HepG2 (cell line): ENCODE measurements at regions of chr11 and their contacts with region 1.

Region 1: DNA sequence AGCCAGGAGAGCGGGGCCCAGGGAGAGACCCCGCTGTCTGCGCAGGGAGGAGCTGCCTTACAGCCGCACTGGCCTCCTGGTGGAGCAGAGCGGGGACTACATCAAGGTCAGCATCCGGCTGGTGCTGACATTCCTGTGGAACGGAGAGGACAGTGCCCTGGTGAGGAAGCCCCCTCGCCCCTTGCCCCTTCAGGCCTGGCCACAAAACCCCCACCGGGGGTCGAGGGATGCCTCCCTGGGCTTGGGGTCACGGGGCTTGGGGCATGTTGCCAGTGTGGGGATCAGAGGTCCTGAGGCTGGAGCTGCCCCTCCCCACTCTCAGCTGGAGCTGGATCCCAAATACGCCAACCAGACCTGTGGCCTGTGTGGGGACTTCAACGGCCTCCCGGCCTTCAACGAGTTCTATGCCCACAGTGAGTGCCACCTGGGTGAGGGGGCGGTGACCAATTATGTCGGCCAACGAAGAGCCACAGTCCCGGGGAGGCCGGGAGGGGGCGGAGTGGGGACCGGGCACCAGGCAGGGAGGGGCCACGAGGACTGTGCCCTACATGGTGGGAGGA is 4.2 kb downstream of the MUC5B start:
- DNase-seq: no peak
- ATAC-seq: peak; percentile 70
- H3K4me3 ChIP-seq: no peak overlapping the region
- H3K27ac ChIP-seq: no peak overlapping the region
- H3K4me1 ChIP-seq: peaks cover 13% of the 10 kb centered on the region
- H3K27me3 ChIP-seq: peaks cover 8 to 22% of the 10 kb centered on the region in 2 experiments; a peak in 4 of 5 replicates
- CTCF ChIP-seq: peak; percentile 40
- EP300 ChIP-seq: no peak
- POLR2A ChIP-seq: no peak
- RAD21 ChIP-seq: 0 out of 2 replicates have a peak, but pooled peaks have one; percentile 23

Region 2: GRCh38 chr11:1070594-1071462 is 156.2 kb before region 1 on chr11:
- CTCF ChIA-PET with region 1: no interaction called
- POLR2A ChIA-PET with region 1: no interaction called
- in situ Hi-C with region 1: no loop called
- intact Hi-C with region 1: no loop called
- DNase-seq: no peak
- ATAC-seq: no peak
- H3K4me3 ChIP-seq: no peak overlapping the region
- H3K27ac ChIP-seq: no peak overlapping the region
- H3K4me1 ChIP-seq: peaks cover 35% of the 10 kb centered on the region
- H3K27me3 ChIP-seq: peaks cover 14 to 36% of the 10 kb centered on the region in 2 experiments; a peak in 4 of 5 replicates
- CTCF ChIP-seq: no peak
- EP300 ChIP-seq: no peak
- POLR2A ChIP-seq: no peak
- RAD21 ChIP-seq: no peak

Region 3: GRCh38 chr11:1113405-1114201 is 113.5 kb before region 1 on chr11:
- CTCF ChIA-PET with region 1: no interaction called
- POLR2A ChIA-PET with region 1: no interaction called
- in situ Hi-C with region 1: loop called (anchors 5 kb)
- intact Hi-C with region 1: no loop called
- DNase-seq: no peak
- ATAC-seq: peak; percentile 10; the same call in 1 of the 3 replicates
- H3K4me3 ChIP-seq: no peak overlapping the region
- H3K27ac ChIP-seq: no peak overlapping the region
- H3K4me1 ChIP-seq: no peaks in the 10 kb centered on the region
- H3K27me3 ChIP-seq: peaks cover 6 to 47% of the 10 kb centered on the region in 2 experiments; a peak in 4 of 5 replicates
- CTCF ChIP-seq: no peak
- EP300 ChIP-seq: no peak
- POLR2A ChIP-seq: no peak
- RAD21 ChIP-seq: no peak

Region 4: DNA sequence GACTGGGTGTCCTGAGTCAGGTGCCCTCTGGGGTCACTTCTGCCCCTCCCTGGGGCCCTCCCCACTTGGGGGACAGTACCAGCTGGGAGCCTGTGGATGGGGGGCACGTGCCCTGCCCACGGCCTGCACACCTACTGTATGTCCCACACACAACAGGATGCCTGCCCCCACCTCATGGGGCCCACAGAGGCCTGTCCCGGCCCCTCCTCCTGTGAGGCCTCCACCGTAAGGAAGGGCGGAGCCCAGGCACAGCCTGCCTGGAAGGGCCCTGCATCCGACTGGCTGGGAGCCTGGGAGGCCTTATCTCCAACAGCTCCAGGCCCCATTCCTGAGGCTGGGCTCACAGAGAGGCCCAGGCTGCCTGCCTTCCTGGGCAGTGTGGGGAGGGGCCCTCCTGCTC is 210.4 kb after region 1 on chr11:
- CTCF ChIA-PET with region 1: no interaction called
- POLR2A ChIA-PET with region 1: no interaction called
- in situ Hi-C with region 1: no loop called
- intact Hi-C with region 1: no loop called
- DNase-seq: peak; percentile 16
- ATAC-seq: peak; percentile 51
- H3K4me3 ChIP-seq: no peak overlapping the region
- H3K27ac ChIP-seq: no peak overlapping the region
- H3K4me1 ChIP-seq: no peaks in the 10 kb centered on the region
- H3K27me3 ChIP-seq: peaks cover 2 to 12% of the 10 kb centered on the region in 2 experiments; a peak in 3 of 5 replicates
- CTCF ChIP-seq: no peak
- EP300 ChIP-seq: no peak
- POLR2A ChIP-seq: no peak
- RAD21 ChIP-seq: no peak